Right ventricle myocardium inferior (tissue), 1 donor: ENCODE measurements at regions of chr1 and their contacts with region 1.

Region 1: DNA sequence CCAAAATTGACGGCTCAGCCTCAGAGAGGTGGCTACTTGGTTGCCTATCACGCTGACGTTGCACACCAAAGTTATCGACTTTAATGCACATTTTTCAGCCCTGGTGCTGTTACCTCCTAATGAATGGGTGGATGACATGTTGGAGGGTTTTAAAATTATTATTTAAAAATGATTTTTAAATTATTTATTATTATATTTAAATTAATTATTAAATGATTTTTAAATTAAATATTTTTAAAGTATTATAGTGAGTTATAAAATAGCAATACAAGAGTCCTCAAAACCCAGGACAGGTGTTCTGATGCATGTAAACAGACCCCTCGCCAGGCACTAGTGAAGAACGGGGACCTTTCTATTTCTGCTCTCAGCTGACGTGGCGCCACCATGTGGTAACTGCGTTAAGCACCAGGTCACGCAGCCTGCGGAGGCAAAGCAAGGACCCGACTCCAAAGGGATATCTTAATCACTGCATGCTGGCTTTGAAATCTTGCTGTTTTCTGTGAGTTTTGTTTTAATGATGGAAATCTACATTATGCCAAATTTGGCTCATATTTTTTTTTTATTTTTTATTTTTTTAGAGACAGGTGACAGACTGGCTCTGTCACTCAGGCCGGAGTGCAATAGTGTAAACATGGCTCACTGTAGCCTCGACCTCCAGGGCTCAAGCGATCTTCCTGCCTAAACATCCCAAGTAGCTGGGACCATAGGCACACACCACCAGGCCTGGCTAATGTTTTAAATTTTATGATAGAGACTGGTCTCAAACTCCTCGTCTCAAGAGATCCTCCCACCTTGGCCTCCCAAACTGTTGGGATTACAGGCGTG is 22.6 kb downstream of the CASP9 start:
- DNase-seq: peak; percentile 81
- ATAC-seq: peak; percentile 47

Region 2: DNA sequence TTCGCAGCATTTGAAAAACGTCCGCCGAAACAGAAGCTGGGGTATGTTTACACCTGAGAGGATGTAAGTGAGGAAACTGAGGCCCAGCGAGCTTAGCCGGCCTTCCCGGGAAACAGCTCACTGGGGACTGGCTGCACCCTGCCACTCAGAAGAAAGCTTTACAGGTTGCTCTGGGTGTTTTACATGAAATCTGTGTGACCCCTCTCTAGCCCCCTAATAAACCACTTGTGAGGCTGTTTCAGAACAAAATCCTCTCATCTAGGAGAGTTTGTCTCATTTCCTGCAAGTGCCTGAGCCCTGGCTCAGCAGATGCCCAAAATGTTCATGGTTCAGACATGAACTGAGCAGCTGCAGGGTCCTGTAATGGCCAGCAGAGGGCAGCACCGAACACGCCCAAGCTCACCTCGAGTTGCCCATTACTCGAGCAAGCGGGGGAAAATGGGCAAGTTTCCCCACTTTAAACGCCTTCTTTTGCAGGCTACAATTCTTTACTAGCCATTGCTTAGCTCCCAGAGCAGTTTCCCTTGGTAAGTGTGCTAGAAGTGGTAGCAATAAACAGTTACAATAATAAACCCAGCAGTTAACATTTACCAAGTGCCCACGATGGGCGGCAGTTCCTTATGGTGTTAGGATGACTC is 177.9 kb before region 1 on chr1:
- intact Hi-C with region 1: loop called (anchors 5 kb)
- DNase-seq: peak; percentile 85
- ATAC-seq: peak; percentile 81

Region 3: DNA sequence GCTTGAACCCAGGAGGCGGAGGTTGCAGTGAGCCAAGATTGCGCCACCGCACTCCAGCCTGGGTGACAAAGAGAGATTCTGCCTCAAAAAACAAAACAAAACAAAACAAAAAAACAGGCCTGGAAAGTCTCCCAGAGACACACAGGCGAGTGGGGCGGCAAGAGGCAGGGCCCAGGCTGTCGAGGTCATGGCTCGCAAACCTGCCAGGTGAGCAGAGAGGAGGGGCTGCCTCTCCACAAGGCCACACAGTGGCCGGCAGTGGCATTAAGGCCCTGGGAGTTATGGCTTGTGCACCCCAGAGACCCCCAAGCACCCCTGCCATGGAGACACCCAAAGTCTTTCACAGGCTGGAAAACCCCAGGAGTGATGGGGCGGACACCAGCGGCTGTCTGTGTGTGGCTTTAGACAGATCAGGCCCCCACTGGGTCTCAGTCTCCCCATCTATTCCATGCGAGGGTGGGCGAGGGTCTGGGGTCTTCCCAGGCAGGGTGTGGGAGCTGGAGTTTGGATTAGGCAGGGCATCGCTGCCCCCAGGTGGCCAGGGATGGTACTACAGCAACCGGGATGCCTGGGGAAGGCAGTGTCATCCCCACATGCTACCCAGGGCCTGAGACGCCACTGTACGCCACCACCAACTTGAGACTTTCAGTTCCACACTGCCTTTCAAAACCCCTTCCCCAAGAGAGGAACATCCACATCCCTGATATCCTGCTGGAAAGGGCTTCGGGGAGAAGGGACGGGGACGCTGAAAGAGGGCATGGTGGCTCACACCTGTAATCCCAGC is 70.4 kb before region 1 on chr1:
- intact Hi-C with region 1: loop called (anchors 5 kb)
- DNase-seq: peak; percentile 85
- ATAC-seq: peak; percentile 67